Endothelial cell of umbilical vein (primary cell): ENCODE measurements at regions of chr20 and their contacts with region 1.

Region 1: DNA sequence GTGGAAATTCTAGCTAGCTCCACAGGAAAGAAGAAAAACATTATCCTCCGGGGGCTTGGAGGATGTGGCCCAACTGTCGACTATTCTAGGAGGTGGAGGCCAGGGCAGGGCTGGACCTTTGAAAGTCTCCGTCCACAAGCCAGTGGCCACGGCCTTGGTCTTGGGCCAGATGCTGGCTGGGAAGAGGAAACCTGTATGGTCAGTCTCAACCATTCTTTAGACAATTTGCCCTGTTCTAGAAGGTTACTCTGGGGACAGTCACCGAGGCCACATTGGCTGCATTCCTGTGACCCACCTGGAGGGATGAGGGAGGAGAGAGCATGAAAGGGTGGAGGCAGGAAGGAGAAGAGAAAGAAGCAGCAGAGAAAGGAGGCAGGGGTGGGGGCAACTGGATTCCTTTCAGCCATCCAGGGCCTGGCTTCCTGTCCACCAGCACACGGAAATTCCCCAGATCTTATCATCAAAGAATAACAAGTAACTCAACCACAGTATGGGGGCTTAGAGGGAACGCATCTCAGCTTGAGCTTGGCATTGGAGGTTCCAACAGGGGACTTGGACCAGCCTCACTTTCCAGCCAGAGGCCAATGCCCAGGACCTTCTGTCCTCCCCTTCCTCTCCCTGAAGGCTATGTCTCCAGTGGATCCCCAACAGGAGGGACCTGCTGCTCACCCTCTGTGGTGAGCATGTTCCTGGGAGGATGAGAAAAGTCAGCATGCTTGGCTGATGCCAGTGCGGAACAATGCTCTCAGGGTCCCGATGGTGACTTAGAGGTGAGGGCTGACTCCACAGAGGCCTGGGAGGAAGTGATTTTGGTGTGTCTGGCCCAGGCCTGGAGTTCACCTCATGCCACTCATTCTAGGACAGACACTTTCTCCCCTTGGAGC is 30.4 kb downstream of the TGM2 start:
- DNase-seq: peak; percentile 94
- H3K4me3 ChIP-seq: no peak overlapping the region
- H3K27ac ChIP-seq: peak overlapping the region; percentile 88
- H3K4me1 ChIP-seq: peaks cover 50% of the 10 kb centered on the region
- H3K27me3 ChIP-seq: no peaks in the 10 kb centered on the region
- CTCF ChIP-seq: no peak
- POLR2A ChIP-seq: peak; percentile 91

Region 2: DNA sequence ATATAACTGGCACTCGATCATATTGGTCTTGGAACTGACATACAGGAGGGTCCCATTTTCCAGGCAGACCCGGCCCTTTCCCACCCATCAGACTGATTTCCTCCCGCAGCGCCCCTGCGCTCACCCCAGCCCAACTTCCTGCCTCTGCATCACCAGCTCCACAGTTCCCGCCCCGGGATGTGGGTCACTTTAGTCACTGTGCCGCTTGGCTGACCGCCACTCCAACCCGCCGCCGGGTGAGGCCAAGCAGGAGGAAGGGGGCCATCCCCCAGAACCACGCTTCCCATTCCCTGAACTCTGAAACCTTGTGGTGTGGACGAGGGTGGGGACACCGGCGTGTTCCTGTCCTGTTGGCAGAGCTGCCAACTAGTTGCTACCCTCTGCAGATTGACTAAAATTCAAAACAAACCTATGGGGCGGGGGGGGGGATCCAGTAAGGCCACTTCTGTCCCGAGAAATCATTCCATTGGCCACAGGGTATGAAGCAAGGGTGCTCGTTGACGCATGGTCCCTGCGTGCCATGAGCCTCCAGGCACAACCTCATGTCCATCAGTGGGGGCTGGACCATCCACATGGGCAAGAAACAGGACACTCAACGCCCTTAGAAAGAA is 18.1 kb after region 1 on chr20:
- CTCF ChIA-PET with region 1: interaction called, 3 read pairs
- POLR2A ChIA-PET with region 1: interaction called, 3 read pairs
- dilution Hi-C with region 1: no loop called
- intact Hi-C with region 1: loop called (anchors 1 kb)
- DNase-seq: peak; percentile 96
- H3K4me3 ChIP-seq: peak overlapping the region in 1 of 3 experiments; percentile 15
- H3K27ac ChIP-seq: peak overlapping the region; percentile 100
- H3K4me1 ChIP-seq: peaks cover 90% of the 10 kb centered on the region
- H3K27me3 ChIP-seq: no peaks in the 10 kb centered on the region
- CTCF ChIP-seq: no peak
- POLR2A ChIP-seq: no peak

Region 3: GRCh38 chr20:38172408-38172807 is 37.8 kb after region 1 on chr20:
- CTCF ChIA-PET with region 1: no interaction called
- POLR2A ChIA-PET with region 1: no interaction called
- dilution Hi-C with region 1: no loop called
- intact Hi-C with region 1: no loop called
- DNase-seq: peak; percentile 15
- H3K4me3 ChIP-seq: no peak overlapping the region
- H3K27ac ChIP-seq: no peak overlapping the region
- H3K4me1 ChIP-seq: peaks cover 42% of the 10 kb centered on the region
- H3K27me3 ChIP-seq: no peaks in the 10 kb centered on the region
- CTCF ChIP-seq: no peak
- POLR2A ChIP-seq: no peak

Region 4: GRCh38 chr20:38321959-38322598 is 187.4 kb after region 1 on chr20:
- CTCF ChIA-PET with region 1: no interaction called
- POLR2A ChIA-PET with region 1: no interaction called
- dilution Hi-C with region 1: no loop called
- intact Hi-C with region 1: no loop called
- DNase-seq: peak; percentile 69
- H3K4me3 ChIP-seq: no peak overlapping the region
- H3K27ac ChIP-seq: no peak overlapping the region
- H3K4me1 ChIP-seq: no peaks in the 10 kb centered on the region
- H3K27me3 ChIP-seq: peaks cover 2 to 5% of the 10 kb centered on the region in 2 experiments
- CTCF ChIP-seq: peak; percentile 66 to 69
- POLR2A ChIP-seq: no peak